ENCODE measurements at regions of chr2 and their contacts with region 1.

Region 1: DNA sequence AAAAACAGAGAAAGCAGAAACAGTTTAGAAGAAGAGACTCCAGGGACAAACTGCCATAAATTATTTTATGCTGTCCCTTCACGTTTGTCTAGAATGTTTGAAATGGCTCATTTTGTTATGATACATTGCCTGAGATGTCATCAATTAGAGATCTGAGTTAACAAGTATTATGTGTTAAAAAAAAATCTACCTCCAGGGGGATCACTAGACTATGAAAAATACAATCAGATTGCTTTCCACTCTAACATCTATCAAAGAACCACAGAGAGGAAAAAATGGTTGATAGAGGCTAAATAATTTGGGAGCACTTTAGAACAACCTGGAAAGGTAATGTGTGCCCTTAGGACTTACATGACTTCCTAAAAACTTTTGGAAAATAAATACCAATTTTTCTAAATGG is 103.8 kb upstream of the CCDC150 start:
- DNase-seq: peak; percentile 37
- ATAC-seq: peak; percentile 57; the same call in 1 of the 2 replicates
- H3K4me3 ChIP-seq: no peak overlapping the region
- H3K27ac ChIP-seq: no peak overlapping the region
- H3K4me1 ChIP-seq: no peaks in the 10 kb centered on the region
- H3K27me3 ChIP-seq: no peaks in the 10 kb centered on the region
- CTCF ChIP-seq: peak; percentile 48

Region 2: GRCh38 chr2:196586511-196586991 is 50.8 kb after region 1 on chr2:
- CTCF ChIA-PET with region 1: no interaction called
- POLR2A ChIA-PET with region 1: no interaction called
- intact Hi-C with region 1: loop called (anchors 2 kb)
- DNase-seq: peak; percentile 97
- ATAC-seq: peak; percentile 59
- H3K4me3 ChIP-seq: no peak overlapping the region
- H3K27ac ChIP-seq: peak overlapping the region; percentile 83
- H3K4me1 ChIP-seq: peaks cover 36% of the 10 kb centered on the region
- H3K27me3 ChIP-seq: no peaks in the 10 kb centered on the region
- CTCF ChIP-seq: no peak

Region 3: GRCh38 chr2:196592912-196593881 is 57.5 kb after region 1 on chr2:
- CTCF ChIA-PET with region 1: no interaction called
- POLR2A ChIA-PET with region 1: no interaction called
- intact Hi-C with region 1: loop called (anchors 2 kb)
- DNase-seq: peak; percentile 25
- ATAC-seq: peak; percentile 76
- H3K4me3 ChIP-seq: peak within 1 kb of the TSS; percentile 77
- H3K27ac ChIP-seq: no peak within 1 kb of the TSS
- H3K4me1 ChIP-seq: peaks cover 5% of the 10 kb centered on the region
- H3K27me3 ChIP-seq: peaks cover 6% of the 10 kb centered on the region
- CTCF ChIP-seq: no peak

Region 4: DNA sequence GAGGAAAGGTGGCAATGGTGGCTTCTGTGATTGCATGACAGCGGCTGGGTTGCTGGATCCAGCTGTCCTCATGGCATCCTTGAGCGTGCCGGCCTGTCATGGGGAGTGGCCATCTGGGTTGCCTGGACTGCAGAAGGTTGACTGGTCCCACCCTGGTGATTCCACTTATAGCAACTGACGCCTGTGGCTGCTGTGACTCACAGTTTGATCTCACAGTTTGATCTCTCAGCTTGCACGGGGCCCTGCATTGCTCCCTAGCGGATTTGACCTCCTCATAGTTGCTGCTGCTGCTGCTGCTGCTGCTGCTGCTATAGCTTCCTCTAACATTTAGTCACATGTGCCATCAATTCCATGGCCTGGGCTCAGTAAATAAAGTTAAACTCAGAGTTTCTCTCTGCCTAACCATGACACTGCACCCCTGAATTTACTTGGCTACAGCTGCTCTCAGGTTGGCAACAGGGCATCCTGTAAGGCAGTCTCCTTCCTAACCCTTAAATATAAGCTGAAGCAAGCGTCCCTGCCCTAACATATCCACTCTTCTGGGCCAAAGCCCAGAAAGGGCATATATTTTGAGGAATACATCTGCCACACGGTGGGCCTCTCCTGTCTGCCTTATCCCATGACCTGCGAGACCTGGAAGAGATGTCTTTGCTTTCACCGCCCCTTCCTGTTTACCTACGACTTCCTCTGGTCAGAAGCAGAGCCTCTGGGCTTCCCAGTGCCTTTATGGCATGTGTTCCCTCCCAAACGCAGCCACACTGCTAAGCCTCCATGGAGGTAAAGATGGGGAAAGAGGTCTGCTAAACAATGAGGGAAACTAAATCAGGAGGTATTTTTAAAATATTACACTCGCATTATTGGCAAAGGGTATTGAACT is 65.9 kb after region 1 on chr2:
- CTCF ChIA-PET with region 1: no interaction called
- POLR2A ChIA-PET with region 1: no interaction called
- intact Hi-C with region 1: loop called (anchors 2 kb)
- DNase-seq: peak; percentile 88
- ATAC-seq: peak; percentile 100
- H3K4me3 ChIP-seq: no peak overlapping the region
- H3K27ac ChIP-seq: peak overlapping the region; percentile 86
- H3K4me1 ChIP-seq: peaks cover 17% of the 10 kb centered on the region
- H3K27me3 ChIP-seq: no peaks in the 10 kb centered on the region
- CTCF ChIP-seq: no peak; the same call in 1 of the 2 replicates

Region 5: GRCh38 chr2:196639180-196640030 is 103.7 kb after region 1 on chr2 and contains the start of gene CCDC150:
- CTCF ChIA-PET with region 1: no interaction called
- POLR2A ChIA-PET with region 1: no interaction called
- intact Hi-C with region 1: loop called (anchors 2 kb)
- DNase-seq: peak; percentile 97
- ATAC-seq: peak; percentile 100
- H3K4me3 ChIP-seq: peak within 1 kb of the TSS; percentile 80
- H3K27ac ChIP-seq: 0 out of 2 replicates have a peak within 1 kb of the TSS, but pooled peaks have one; percentile 5
- H3K4me1 ChIP-seq: peaks cover 7% of the 10 kb centered on the region; the same call in 1 of the 2 replicates
- H3K27me3 ChIP-seq: no peaks in the 10 kb centered on the region
- CTCF ChIP-seq: peak; percentile 47
- total RNA-seq, gene CCDC150: 13.1 and 15.6 TPM in 2 replicates

Region 6: GRCh38 chr2:196758474-196759377 is 223.0 kb after region 1 on chr2:
- CTCF ChIA-PET with region 1: no interaction called
- POLR2A ChIA-PET with region 1: no interaction called
- intact Hi-C with region 1: loop called (anchors 1 kb)
- DNase-seq: peak; percentile 40
- ATAC-seq: peak; percentile 69
- H3K4me3 ChIP-seq: no peak overlapping the region
- H3K27ac ChIP-seq: no peak overlapping the region
- H3K4me1 ChIP-seq: no peaks in the 10 kb centered on the region
- H3K27me3 ChIP-seq: no peaks in the 10 kb centered on the region
- CTCF ChIP-seq: peak; percentile 67